Activated CD8-positive, alpha-beta T cell treated with anti-CD3 and anti-CD28 coated beads for 36 hours (primary cell): ENCODE measurements at regions of chr19 and their contacts with region 1.

Region 1: GRCh38 chr19:45569619-45570421 is 14.8 kb downstream of the OPA3 start:
- DNase-seq: peak; percentile 81
- ATAC-seq: peak; percentile 91
- H3K4me3 Mint-ChIP-seq: no peak overlapping the region
- H3K27ac Mint-ChIP-seq: no peak overlapping the region
- H3K4me1 Mint-ChIP-seq: peaks cover 7% of the 10 kb centered on the region
- H3K27me3 Mint-ChIP-seq: no peaks in the 10 kb centered on the region
- CTCF ChIP-seq: peak; percentile 72

Region 2: DNA sequence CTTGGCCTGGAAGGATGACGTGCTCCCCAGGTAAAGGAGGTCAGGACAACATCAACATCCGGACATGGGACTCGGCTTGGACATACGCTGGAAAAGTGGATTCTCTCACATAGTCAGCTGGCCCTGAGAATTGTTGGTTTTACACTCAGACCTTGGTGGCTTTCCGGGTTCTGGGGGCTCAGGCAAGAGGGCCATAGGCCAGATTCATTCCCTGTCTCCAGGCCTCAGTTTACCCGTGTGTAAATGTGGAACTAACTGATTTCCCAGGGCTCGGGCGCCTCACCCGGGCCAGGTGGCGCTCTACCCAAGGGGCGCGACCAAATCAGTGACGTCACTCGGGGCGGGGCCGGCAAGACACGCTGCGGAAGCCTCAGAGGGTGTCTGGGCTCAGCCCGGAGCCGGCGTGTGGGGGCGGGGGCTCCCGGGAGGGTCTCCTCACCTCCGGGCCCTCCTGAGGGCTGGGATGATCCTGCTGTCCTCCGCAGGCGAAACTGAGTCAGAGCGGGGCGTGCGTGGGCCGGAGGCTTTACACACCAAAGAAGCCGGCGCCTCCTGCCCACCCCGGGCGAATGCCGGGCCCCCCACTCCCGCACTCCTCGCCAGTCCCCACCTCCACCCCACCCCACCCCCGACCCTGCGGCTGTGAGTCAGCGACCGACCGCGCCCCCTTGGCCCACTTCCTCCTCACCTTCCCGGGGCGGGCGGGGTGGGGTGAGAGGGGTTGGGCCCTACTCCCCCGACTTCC is 63.4 kb before region 1 on chr19:
- CTCF ChIA-PET with region 1: no interaction called
- POLR2A ChIA-PET with region 1: no interaction called
- intact Hi-C with region 1: no loop called
- DNase-seq: peak; percentile 100
- ATAC-seq: peak; percentile 83
- H3K4me3 Mint-ChIP-seq: peak overlapping the region; percentile 96
- H3K27ac Mint-ChIP-seq: peak overlapping the region; percentile 95
- H3K4me1 Mint-ChIP-seq: peaks cover 33% of the 10 kb centered on the region
- H3K27me3 Mint-ChIP-seq: no peaks in the 10 kb centered on the region
- CTCF ChIP-seq: peak; percentile 45

Region 3: DNA sequence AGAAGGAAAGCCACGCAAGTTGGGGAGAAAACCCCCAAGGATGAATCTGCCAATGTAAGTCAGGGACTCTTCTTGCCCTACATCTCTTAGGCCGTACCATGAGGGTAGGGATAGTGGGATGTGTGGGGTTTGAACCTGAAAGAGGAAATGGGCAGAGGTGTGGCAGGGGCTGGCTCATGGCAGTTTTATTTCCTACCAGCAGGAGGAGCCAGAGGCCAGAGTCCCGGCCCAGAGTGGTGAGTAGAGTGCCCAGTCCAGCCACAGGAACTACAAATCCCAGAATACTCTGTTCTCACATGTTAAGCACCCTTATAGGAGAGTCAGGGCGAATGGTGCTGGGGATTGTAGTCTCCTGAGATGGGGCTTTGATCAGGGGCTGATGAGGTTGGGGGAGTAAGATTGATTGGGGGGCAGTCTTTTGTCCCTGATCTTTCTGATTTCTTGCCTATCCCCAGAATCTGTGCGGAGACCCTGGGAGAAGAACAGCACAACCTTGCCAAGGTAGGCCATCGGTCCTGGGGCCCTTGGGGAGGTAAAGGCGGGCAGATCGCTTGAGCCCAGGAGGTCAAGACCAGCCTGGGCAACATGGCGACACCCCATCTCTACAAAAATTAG is 46.1 kb before region 1 on chr19:
- CTCF ChIA-PET with region 1: interaction called, 5 read pairs
- POLR2A ChIA-PET with region 1: no interaction called
- intact Hi-C with region 1: loop called (anchors 10 kb)
- DNase-seq: peak; percentile 82
- ATAC-seq: peak; percentile 98
- H3K4me3 Mint-ChIP-seq: no peak overlapping the region
- H3K27ac Mint-ChIP-seq: peak overlapping the region; percentile 58
- H3K4me1 Mint-ChIP-seq: peaks cover 14% of the 10 kb centered on the region
- H3K27me3 Mint-ChIP-seq: no peaks in the 10 kb centered on the region
- CTCF ChIP-seq: peak; percentile 79

Region 4: GRCh38 chr19:45601524-45602374 is 31.9 kb after region 1 on chr19 and contains the start of gene GPR4:
- CTCF ChIA-PET with region 1: no interaction called
- POLR2A ChIA-PET with region 1: no interaction called
- intact Hi-C with region 1: no loop called
- DNase-seq: no peak
- ATAC-seq: peak; percentile 54
- H3K4me3 Mint-ChIP-seq: no peak within 1 kb of the TSS
- H3K27ac Mint-ChIP-seq: no peak within 1 kb of the TSS
- H3K4me1 Mint-ChIP-seq: peaks cover 24% of the 10 kb centered on the region
- H3K27me3 Mint-ChIP-seq: peaks cover 59% of the 10 kb centered on the region
- CTCF ChIP-seq: no peak
- total RNA-seq, gene GPR4: not detected

Region 5: DNA sequence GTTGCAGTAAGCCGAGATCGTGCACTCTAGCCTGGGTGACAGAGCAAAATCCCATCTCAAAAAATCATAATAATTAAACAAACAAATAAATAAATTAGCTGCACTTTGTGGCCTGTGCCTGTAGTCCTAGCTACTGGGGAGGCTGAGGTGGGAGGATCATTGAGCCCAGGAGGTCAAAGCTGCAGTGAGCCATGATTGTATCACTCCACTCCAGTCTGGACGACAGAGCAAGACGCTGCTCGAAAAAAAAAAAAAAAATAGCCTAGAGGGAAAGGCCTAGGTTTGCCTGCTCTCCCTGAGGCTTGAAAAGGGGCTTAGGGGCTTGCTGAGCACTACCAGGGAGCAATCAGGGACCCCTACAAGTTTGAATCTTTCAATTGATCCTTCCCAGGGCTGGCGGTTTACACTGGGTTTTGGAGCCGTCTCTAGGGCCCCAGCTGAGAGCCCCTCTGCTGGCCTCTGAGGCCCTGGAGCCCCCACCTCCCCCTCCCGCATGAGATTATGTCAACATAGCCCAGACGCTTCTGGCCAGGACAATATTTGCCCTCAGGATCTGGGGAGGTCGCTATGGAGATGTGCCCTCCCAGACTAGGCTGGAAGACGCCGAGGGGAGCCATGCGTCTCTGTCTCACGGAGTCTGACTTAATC is 87.8 kb after region 1 on chr19:
- CTCF ChIA-PET with region 1: no interaction called
- POLR2A ChIA-PET with region 1: no interaction called
- intact Hi-C with region 1: no loop called
- DNase-seq: no peak
- ATAC-seq: no peak
- H3K4me3 Mint-ChIP-seq: no peak overlapping the region
- H3K27ac Mint-ChIP-seq: no peak overlapping the region
- H3K4me1 Mint-ChIP-seq: no peaks in the 10 kb centered on the region
- H3K27me3 Mint-ChIP-seq: peaks cover 7% of the 10 kb centered on the region
- CTCF ChIP-seq: no peak